Right ventricle myocardium inferior (tissue), 1 donor: ENCODE measurements at regions of chr3 and their contacts with region 1.

Region 1: DNA sequence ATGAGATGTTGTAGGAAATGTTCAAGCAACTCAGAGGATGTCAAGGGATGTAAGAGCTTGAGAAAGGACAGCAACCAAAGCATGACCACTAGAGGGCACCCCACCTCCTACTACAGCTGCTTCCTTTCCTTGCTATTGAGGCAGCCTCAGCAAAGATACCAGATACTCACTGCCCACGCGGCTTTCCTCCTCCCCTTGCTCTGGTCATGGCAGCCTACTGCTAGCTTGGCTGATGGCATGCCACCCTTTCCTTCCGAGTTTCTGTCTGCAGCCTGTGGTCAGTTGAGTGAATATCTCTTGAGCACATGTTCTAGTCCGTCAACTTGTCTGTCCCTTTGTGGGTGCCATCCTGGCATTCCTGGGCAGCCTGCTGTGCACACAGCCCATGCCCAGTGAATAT is 4.4 kb upstream of the CXCR6 start:
- DNase-seq: peak; percentile 78
- ATAC-seq: peak; percentile 74

Region 2: DNA sequence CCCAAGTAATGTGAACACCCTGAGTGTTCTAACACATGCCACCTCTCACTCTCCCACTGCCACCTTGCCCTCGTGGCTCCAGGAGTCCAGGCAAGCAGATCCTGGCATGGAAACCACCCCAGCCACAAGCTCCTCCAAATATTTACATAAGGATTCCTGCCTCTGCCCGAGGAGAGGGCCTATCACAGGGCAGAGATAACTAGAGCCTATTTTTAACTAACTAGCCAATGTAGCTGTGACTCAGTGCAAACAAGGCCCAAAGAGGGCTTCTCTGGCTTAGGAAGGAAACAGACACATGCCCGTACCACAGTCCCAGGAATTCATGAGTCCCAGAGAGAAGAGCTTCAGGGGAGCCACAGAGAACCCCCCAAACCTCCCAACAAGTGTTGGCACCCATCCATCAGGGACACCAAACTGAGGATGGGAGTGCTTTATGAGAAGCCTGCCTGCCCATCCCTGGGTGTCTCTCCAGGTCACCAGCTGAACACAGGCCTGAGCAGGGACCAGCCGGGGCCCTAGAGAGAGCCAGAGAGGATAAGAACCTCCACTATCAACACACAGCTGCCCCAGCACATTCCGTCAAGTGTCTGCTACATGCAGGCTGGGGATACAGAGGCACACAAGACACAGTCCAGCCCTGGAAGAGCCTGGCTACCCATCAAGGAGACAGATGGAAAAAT is 47.6 kb after region 1 on chr3:
- intact Hi-C with region 1: loop called (anchors 5 kb)
- DNase-seq: no peak
- ATAC-seq: peak; percentile 73